ENCODE measurements at regions of chr10 and their contacts with region 1.

Region 1: GRCh38 chr10:118732245-118733165 is 22.3 kb downstream of the CACUL1 start:
- DNase-seq: no peak
- H3K4me3 Mint-ChIP-seq: no peak overlapping the region
- H3K27ac Mint-ChIP-seq: peak overlapping the region; percentile 28
- H3K4me1 Mint-ChIP-seq: peaks cover 56% of the 10 kb centered on the region
- H3K27me3 Mint-ChIP-seq: no peaks in the 10 kb centered on the region

Region 2: DNA sequence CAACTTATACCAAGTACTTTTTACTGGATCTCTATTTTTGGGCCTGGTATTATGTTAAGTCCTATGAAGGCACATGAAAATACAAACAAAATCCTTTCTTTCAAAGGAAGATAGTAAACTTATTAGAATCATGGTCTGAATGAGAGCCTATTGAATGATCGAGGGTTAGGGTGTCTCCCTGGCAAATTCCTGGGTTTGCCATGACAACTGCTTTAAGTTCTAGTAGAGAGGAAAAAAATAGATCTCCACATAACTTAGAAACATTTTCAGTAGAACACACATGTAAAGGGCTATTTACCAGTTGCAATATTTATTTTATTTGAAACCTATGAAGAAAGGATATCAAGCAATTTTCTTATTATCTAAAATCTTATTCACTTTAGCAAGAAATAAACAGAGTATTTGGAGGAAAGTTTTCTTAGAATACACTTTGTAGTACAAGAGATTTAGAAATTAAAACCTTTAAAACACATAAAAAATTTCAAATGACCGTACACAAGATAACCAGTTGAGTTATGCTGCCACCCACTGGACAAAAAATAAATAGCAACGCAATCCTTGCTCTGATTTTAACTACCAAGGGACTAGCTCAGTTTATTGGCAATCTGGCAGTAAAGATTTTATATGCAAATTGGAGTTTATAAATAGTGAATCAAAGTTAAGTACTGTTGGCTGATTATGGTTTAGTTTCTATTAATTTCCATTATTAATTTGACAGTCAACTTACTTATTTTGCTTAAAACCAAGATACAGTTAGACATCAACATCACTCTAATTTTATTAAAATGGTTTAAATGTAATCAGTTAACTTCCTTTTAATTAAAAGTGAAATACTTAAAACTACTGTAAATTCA is 11.6 kb before region 1 on chr10:
- CTCF ChIA-PET with region 1: interaction called, 13 read pairs
- POLR2A ChIA-PET with region 1: no interaction called
- DNase-seq: peak; percentile 55
- H3K4me3 Mint-ChIP-seq: no peak overlapping the region
- H3K27ac Mint-ChIP-seq: no peak overlapping the region
- H3K4me1 Mint-ChIP-seq: peaks cover 3% of the 10 kb centered on the region
- H3K27me3 Mint-ChIP-seq: no peaks in the 10 kb centered on the region

Region 3: DNA sequence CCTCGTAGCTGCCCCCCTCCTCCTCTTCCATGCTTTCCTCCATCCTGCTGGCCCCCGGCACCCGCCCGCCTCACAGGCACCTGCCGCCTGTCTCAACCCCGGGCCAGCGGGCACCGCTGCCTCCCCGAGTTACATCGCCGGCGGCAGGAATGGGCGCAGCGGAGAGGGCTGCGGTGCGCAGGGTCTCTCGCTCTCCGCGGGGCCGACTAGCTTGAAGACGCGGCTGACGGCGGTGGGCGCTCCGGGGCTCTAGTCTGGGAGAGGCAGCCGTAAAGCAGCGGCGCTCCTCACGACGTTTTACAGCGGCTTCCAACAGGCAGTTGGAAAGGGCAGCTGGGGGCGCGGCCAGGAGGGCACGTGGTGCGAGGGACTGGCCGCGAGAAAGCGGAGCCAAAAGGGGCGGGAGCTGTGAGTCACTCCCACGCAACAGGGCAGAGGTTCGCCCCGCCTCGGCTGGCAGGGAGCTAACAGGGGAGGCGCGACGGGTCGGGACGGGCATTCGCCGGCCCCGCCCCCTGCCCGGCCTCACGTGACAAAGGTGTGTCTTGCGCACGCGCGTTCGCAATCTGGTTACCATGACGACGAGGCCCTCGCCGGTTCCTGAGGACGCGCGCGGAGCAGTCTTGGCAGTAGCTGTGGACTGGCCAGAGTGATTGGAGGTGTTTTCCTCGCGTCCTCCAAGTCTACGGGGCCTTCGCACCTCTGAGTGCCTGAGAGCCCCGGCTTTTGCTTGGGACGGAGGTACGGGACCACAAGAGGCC is 22.4 kb after region 1 on chr10 and contains the start of gene CACUL1:
- CTCF ChIA-PET with region 1: interaction called, 11 read pairs
- POLR2A ChIA-PET with region 1: interaction called, 17 read pairs
- DNase-seq: peak; percentile 100
- H3K4me3 Mint-ChIP-seq: peak within 1 kb of the TSS; percentile 87
- H3K27ac Mint-ChIP-seq: peak within 1 kb of the TSS; percentile 78
- H3K4me1 Mint-ChIP-seq: peaks cover 25% of the 10 kb centered on the region
- H3K27me3 Mint-ChIP-seq: peaks cover 6% of the 10 kb centered on the region
- total RNA-seq, gene CACUL1: 25.8 to 27.9 TPM

Region 4: GRCh38 chr10:118901380-118901779 is 168.9 kb after region 1 on chr10:
- CTCF ChIA-PET with region 1: no interaction called
- POLR2A ChIA-PET with region 1: no interaction called
- DNase-seq: no peak
- H3K4me3 Mint-ChIP-seq: no peak overlapping the region
- H3K27ac Mint-ChIP-seq: no peak overlapping the region
- H3K4me1 Mint-ChIP-seq: no peaks in the 10 kb centered on the region
- H3K27me3 Mint-ChIP-seq: peaks cover 6% of the 10 kb centered on the region